Heart left ventricle (tissue), 16 donors: ENCODE measurements at regions of chr9 and their contacts with region 1.

Region 1: DNA sequence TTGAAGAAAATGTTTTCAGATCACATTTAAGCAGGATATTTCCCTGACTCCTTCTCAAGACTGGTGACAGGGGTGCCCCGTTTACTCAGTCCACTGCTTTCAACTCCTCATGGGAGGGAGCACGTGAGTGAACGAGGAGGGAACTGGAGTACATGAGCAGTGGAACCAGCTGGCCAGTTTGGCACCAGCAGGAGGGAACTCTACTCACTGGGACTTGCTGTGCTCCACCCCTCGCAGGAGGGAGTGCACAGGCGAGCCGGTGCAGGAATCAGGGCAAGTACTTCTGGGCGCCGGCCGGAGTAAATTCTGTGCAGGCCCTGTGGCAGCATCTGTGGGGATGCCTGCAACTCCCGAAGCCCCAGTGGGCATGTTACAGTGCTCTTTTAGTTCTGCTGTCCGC is 1941.1 kb upstream of the C9orf72 start:
- DNase-seq: peak in 1 of 5 donors; percentile 31
- ATAC-seq: no peak
- H3K4me3 ChIP-seq: no peak overlapping the region
- H3K27ac ChIP-seq: no peak overlapping the region
- H3K4me1 ChIP-seq: no peaks in the 10 kb centered on the region
- H3K27me3 ChIP-seq: no peaks in the 10 kb centered on the region
- CTCF ChIP-seq: no peak
- POLR2A ChIP-seq: no peak

Region 2: DNA sequence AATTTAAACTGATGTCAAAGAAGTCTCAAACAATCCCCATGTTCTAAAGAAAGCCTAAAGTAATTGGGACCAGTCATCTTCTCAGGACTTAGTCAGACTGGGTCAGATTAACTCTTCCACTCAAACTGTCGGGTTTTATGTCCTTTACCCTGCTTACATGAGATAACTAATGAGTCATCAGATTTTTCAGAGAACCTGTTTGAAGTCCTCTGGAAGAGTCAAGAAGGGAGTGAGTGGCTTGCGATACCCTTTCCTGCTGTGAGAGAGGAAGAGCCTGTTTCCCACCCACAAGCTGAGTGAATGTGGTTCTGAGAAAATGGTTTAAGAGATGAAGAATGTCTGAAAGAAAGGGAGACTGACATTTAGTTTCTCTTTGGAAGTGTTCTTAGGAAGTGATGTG is 74.4 kb before region 1 on chr9:
- intact Hi-C with region 1: loop called in 1 of 10 experiments (anchors 10 kb)
- DNase-seq: no peak
- ATAC-seq: no peak
- H3K4me3 ChIP-seq: no peak overlapping the region
- H3K27ac ChIP-seq: no peak overlapping the region
- H3K4me1 ChIP-seq: no peaks in the 10 kb centered on the region
- H3K27me3 ChIP-seq: no peaks in the 10 kb centered on the region
- CTCF ChIP-seq: no peak
- POLR2A ChIP-seq: no peak

Region 3: GRCh38 chr9:29564564-29564963 is 50.2 kb after region 1 on chr9:
- intact Hi-C with region 1: no loop called
- DNase-seq: no peak
- ATAC-seq: no peak
- H3K4me3 ChIP-seq: no peak overlapping the region
- H3K27ac ChIP-seq: no peak overlapping the region
- H3K4me1 ChIP-seq: no peaks in the 10 kb centered on the region
- H3K27me3 ChIP-seq: no peaks in the 10 kb centered on the region
- CTCF ChIP-seq: no peak
- POLR2A ChIP-seq: no peak